Mammary epithelial cell (primary cell): ENCODE measurements at regions of chrX and their contacts with region 1.

Region 1: GRCh38 chrX:44542567-44543325 is at the start of gene FUNDC1:
- DNase-seq: peak; percentile 91
- H3K4me3 ChIP-seq: peak within 1 kb of the TSS; percentile 63 to 81 (median 79)
- H3K27ac ChIP-seq: peak within 1 kb of the TSS; percentile 72
- H3K4me1 ChIP-seq: peaks cover 4% of the 10 kb centered on the region
- H3K27me3 ChIP-seq: no peaks in the 10 kb centered on the region
- CTCF ChIP-seq: peak in 1 of 2 donors; percentile 55
- total RNA-seq, gene FUNDC1: 14.5 to 16.4 TPM

Region 2: DNA sequence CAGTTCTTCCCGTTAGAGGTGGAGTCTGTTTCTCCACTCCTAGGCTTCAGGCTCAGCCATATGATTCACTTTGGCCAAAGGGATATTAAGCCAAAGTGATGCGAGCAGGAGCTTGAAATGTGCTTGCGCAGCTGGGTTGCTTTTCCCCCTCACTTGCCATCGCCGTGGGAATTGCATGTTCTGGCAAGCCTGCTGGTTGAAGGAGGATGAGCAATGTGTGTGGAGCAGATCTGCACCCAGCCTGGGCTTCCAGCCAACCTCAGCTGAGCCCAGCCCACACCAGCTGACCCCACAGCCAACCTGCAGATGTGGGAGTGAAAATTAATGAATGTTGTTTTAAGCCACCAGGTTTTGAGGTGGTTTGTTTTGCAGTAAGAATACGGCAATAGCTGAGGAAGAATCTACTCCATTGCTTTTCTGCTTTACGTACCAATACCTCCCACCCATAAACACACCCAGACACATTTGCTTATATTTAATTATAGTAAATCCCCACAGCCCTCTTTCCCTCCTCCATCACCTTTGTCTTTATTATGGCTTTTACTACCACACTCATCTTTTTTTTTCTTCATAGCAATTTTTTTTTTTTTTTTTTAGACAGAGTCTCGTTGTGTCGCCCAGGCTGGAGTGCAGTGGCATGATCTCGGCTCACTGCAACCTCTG is 132.7 kb after region 1 on chrX:
- CTCF ChIA-PET with region 1: no interaction called
- dilution Hi-C with region 1: no loop called
- in situ Hi-C with region 1: no loop called
- intact Hi-C with region 1: loop called (anchors 10 kb)
- DNase-seq: peak; percentile 98
- H3K4me3 ChIP-seq: no peak overlapping the region
- H3K27ac ChIP-seq: no peak overlapping the region
- H3K4me1 ChIP-seq: peaks cover 11% of the 10 kb centered on the region
- H3K27me3 ChIP-seq: no peaks in the 10 kb centered on the region
- CTCF ChIP-seq: peak in 1 of 2 donors; percentile 6

Region 3: GRCh38 chrX:45070116-45071007 is 527.6 kb after region 1 on chrX:
- CTCF ChIA-PET with region 1: no interaction called
- dilution Hi-C with region 1: no loop called
- in situ Hi-C with region 1: no loop called
- intact Hi-C with region 1: loop called (anchors 5 kb)
- DNase-seq: peak; percentile 29
- H3K4me3 ChIP-seq: no peak overlapping the region
- H3K27ac ChIP-seq: no peak overlapping the region
- H3K4me1 ChIP-seq: no peaks in the 10 kb centered on the region
- H3K27me3 ChIP-seq: no peaks in the 10 kb centered on the region
- CTCF ChIP-seq: peak; percentile 69 to 72